ENCODE measurements at regions of chr20 and their contacts with region 1.

Region 1: DNA sequence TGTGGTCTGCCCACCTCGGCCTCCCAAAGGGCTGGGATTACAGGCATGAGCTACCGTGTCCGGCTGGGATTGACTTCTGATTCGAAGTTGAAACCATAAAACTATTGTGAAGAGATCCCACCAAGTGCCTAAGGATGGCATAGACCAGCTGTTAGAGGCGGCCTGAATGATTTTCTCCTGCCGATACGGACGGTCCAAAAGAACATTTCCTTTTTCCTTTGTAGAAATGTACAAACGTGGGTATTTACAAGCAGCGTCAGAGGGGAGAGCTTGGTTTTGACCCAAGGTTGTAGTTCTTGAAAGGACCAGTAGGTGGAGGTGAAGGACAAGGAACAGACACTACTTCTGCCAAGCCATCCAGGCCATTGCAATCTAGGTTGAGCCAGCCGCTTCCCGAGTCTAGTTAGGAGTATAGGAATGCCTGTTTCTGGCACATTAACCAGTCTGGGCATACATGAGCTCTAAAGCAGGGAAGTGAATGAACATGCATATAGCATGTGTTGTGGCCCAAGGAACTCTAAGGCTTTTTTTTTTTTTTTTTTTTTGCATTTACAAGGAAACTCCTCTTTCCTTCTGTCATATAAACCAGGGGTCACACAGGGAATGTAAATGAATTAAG is 29.1 kb downstream of the MOCS3 start:
- DNase-seq: peak; percentile 93
- H3K4me3 Mint-ChIP-seq: no peak overlapping the region
- H3K27ac Mint-ChIP-seq: no peak overlapping the region
- H3K4me1 Mint-ChIP-seq: peaks cover 5% of the 10 kb centered on the region
- H3K27me3 Mint-ChIP-seq: peaks cover 40% of the 10 kb centered on the region
- CTCF ChIP-seq: peak; percentile 86

Region 2: DNA sequence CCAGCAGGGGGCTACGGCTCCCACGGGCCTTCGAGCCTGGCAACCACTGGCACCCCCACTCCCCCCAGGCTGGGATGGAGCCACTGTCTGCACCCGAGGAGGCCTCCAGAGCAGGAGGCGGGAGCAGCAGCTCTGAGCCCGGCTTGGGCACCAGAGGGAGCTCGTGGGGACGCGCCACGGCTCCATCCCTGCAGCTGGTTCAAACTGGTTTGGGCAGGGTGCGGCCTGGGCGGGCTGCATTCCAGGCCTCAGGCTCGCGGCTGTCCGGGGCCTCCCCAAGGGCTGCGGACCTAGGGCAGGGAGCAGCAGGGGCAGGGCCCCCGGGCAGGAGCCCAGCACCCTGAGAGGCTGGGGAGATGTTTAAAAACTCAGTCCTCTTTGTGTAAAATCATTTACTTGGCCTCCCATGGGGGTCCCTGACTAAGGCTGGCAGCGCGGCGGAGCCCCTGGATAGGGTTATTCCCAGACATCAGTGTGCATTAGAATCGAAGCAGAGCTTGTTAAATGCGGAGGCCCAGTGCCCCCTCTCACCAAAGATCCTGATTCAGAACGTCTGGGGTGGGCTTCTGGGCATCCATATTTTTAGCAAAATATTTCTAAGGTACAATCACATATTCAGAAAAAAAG is 196.9 kb before region 1 on chr20:
- CTCF ChIA-PET with region 1: interaction called, 10 read pairs
- intact Hi-C with region 1: no loop called
- DNase-seq: peak; percentile 99
- H3K4me3 Mint-ChIP-seq: peak overlapping the region; percentile 48
- H3K27ac Mint-ChIP-seq: peak overlapping the region; percentile 87
- H3K4me1 Mint-ChIP-seq: peaks cover 42% of the 10 kb centered on the region
- H3K27me3 Mint-ChIP-seq: no peaks in the 10 kb centered on the region
- CTCF ChIP-seq: peak; percentile 96

Region 3: GRCh38 chr20:50924261-50924920 is 63.3 kb before region 1 on chr20:
- CTCF ChIA-PET with region 1: no interaction called
- intact Hi-C with region 1: no loop called
- DNase-seq: no peak
- H3K4me3 Mint-ChIP-seq: no peak overlapping the region
- H3K27ac Mint-ChIP-seq: no peak overlapping the region
- H3K4me1 Mint-ChIP-seq: peaks cover 43% of the 10 kb centered on the region
- H3K27me3 Mint-ChIP-seq: no peaks in the 10 kb centered on the region
- CTCF ChIP-seq: no peak

Region 4: DNA sequence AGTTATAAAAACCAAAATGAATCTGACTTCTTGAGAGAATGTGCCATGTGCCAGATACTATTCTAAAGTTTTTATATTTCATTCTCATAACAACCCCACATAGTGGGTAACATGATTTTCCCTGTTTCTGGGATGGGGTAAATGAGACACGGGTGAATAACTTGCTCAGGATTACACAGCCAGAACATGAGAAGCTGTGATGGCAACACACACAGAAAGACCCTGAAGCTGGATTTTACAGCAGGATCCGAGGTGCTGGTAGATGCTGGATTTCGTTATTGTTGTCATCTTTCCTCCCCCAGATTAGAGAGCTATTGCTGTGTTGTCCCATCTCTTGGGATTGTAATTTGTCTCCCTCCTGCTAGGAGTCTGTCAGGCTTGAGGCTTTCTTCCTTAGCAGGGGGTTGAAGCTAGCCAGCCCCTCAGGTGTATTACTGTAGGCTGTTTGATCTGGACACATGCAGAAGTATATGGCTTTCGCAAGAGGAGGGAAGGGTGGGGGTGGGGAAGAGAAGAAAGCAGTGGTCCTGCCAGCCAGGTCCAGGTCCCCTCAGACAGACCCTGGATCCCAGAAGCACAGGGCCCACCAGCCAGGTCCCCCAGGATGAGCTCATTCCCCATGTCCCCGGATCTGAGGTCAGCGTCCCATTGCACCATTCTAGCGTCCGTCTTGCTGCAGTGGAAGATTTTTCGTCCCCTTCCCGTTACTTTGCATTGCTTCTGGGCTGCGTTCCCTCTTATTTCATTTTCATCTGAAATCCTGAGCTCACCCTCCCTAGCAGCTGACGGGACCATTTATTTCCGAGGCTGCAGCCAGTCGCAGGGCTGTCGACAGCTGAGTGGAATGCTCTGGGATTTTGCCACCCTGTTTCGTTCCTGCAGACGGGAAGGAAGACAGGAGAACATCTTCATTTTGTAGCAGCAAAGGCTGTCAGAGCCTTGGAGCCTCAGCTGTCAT is 42.5 kb after region 1 on chr20:
- CTCF ChIA-PET with region 1: interaction called, 10 read pairs
- intact Hi-C with region 1: no loop called
- DNase-seq: no peak
- H3K4me3 Mint-ChIP-seq: no peak overlapping the region
- H3K27ac Mint-ChIP-seq: no peak overlapping the region
- H3K4me1 Mint-ChIP-seq: peaks cover 8% of the 10 kb centered on the region
- H3K27me3 Mint-ChIP-seq: peaks cover 70% of the 10 kb centered on the region
- CTCF ChIP-seq: no peak

Region 5: GRCh38 chr20:51169813-51170212 is 182.1 kb after region 1 on chr20:
- CTCF ChIA-PET with region 1: no interaction called
- intact Hi-C with region 1: no loop called
- DNase-seq: no peak
- H3K4me3 Mint-ChIP-seq: no peak overlapping the region
- H3K27ac Mint-ChIP-seq: no peak overlapping the region
- H3K4me1 Mint-ChIP-seq: no peaks in the 10 kb centered on the region
- H3K27me3 Mint-ChIP-seq: peaks cover 48% of the 10 kb centered on the region
- CTCF ChIP-seq: no peak

Region 6: DNA sequence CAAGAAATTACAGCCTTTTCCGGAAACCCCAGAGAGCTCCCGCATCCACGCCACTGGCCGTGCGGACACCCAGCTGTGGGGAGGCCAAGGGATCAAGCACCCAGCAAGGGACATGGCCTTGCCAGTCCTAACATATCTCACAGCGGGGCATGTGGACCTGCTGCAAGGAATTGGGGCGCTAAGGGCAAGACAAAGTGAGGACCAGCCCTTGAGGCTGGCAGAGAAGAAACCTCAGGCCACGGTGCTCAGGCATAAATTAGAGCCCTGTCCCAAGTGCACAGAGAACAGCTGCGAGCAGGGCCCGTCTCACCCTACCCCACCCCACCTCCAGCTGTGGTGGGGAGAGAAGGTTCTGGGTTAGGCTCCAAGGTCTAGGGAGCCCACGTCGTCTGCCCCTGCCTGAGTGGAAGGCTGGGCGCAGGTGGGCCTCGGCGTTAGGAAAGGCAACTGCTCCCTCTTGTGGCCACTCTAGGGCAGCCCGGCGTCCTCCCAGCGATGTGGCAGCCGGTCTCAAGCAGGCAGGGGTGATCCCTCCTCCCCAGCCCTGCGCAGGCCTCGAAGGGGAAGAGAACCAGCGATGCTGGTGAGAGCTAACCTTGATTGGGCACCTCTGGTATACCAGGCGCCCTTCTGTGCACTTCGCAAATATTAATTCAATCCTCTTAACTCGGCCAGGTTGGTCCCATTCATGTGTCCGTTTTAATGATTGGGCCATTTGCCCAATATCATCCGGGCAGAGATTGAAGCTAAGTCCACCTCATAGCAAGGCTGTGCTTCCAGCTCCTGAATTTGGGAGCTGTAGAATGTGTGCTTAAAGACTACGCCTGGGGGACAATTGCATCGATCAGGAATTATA is 319.0 kb after region 1 on chr20:
- CTCF ChIA-PET with region 1: interaction called, 49 read pairs
- intact Hi-C with region 1: loop called (anchors 1 kb)
- DNase-seq: peak; percentile 92
- H3K4me3 Mint-ChIP-seq: no peak overlapping the region
- H3K27ac Mint-ChIP-seq: no peak overlapping the region
- H3K4me1 Mint-ChIP-seq: peaks cover 25% of the 10 kb centered on the region
- H3K27me3 Mint-ChIP-seq: peaks cover 32% of the 10 kb centered on the region
- CTCF ChIP-seq: peak; percentile 98

Region 7: GRCh38 chr20:51326201-51326819 is 338.6 kb after region 1 on chr20:
- CTCF ChIA-PET with region 1: interaction called, 121 read pairs
- intact Hi-C with region 1: loop called (anchors 1 kb)
- DNase-seq: peak; percentile 66
- H3K4me3 Mint-ChIP-seq: no peak overlapping the region
- H3K27ac Mint-ChIP-seq: no peak overlapping the region
- H3K4me1 Mint-ChIP-seq: no peaks in the 10 kb centered on the region
- H3K27me3 Mint-ChIP-seq: peaks cover 82% of the 10 kb centered on the region
- CTCF ChIP-seq: peak; percentile 79

Region 8: GRCh38 chr20:51372176-51372803 is 384.6 kb after region 1 on chr20:
- CTCF ChIA-PET with region 1: interaction called, 6 read pairs
- intact Hi-C with region 1: loop called (anchors 5 kb)
- DNase-seq: peak; percentile 89
- H3K4me3 Mint-ChIP-seq: no peak overlapping the region
- H3K27ac Mint-ChIP-seq: no peak overlapping the region
- H3K4me1 Mint-ChIP-seq: no peaks in the 10 kb centered on the region
- H3K27me3 Mint-ChIP-seq: peaks cover 48% of the 10 kb centered on the region
- CTCF ChIP-seq: peak; percentile 87

Region 9: GRCh38 chr20:51695574-51696303 is 708.0 kb after region 1 on chr20:
- CTCF ChIA-PET with region 1: interaction called, 12 read pairs
- intact Hi-C with region 1: no loop called
- DNase-seq: peak; percentile 69
- H3K4me3 Mint-ChIP-seq: peak overlapping the region; percentile 5
- H3K27ac Mint-ChIP-seq: peak overlapping the region; percentile 81
- H3K4me1 Mint-ChIP-seq: peaks cover 47% of the 10 kb centered on the region
- H3K27me3 Mint-ChIP-seq: no peaks in the 10 kb centered on the region
- CTCF ChIP-seq: no peak

Measured in Calu3 (cell line).